CD8-positive, alpha-beta T cell (primary cell): ENCODE measurements at regions of chr9 and their contacts with region 1.

Region 1: DNA sequence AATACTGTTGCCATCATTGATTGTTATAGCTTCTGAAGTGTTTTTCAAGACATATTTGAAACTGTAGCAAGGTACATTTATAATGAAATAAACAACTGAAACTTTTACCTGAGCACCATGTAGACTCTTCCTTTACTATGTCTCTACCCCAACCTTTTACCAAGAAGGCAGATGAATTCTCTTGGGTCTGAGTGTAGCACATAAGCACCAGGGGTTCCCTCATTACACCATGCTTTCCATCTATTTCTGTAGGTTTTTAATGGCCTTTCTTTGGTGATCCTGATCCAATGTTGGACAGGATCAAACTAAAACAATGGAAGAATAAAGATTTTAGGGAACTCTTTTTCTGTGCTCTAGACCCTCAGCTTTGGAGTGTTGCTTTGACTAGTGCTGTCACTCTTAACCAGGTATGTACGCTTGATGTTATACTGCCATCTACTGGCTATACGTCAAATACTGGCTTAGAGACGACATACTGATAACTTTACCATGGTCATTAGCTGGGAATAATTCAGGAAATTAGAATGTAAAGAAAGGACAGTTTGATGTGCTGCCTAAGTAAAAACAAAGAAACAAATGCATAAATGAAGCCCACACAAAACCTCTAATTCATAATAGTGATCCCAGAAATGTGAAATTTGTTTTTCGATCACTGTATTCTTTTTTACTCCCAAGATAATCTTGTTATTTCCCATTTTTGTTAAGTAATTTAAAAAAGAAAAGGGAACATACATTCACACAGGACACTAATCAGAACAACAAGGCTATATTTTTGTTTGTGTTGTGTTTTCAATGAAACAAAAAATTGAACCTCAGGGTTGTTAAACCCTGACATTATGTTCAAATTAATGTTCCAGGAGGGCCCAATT is 30.7 kb downstream of the IFNW1 start:
- DNase-seq: peak in 3 of 9 experiments; percentile 19 to 85 (median 78)
- ATAC-seq: peak; percentile 92
- H3K4me3 ChIP-seq: no peak overlapping the region
- H3K4me3 Mint-ChIP-seq: no peak overlapping the region
- H3K27ac ChIP-seq: no peak overlapping the region
- H3K27ac Mint-ChIP-seq: no peak overlapping the region
- H3K4me1 ChIP-seq: no peaks in the 10 kb centered on the region
- H3K4me1 Mint-ChIP-seq: no peaks in the 10 kb centered on the region
- H3K27me3 ChIP-seq: no peaks in the 10 kb centered on the region
- H3K27me3 Mint-ChIP-seq: peaks cover 2% of the 10 kb centered on the region
- CTCF ChIP-seq: peak; percentile 95

Region 2: DNA sequence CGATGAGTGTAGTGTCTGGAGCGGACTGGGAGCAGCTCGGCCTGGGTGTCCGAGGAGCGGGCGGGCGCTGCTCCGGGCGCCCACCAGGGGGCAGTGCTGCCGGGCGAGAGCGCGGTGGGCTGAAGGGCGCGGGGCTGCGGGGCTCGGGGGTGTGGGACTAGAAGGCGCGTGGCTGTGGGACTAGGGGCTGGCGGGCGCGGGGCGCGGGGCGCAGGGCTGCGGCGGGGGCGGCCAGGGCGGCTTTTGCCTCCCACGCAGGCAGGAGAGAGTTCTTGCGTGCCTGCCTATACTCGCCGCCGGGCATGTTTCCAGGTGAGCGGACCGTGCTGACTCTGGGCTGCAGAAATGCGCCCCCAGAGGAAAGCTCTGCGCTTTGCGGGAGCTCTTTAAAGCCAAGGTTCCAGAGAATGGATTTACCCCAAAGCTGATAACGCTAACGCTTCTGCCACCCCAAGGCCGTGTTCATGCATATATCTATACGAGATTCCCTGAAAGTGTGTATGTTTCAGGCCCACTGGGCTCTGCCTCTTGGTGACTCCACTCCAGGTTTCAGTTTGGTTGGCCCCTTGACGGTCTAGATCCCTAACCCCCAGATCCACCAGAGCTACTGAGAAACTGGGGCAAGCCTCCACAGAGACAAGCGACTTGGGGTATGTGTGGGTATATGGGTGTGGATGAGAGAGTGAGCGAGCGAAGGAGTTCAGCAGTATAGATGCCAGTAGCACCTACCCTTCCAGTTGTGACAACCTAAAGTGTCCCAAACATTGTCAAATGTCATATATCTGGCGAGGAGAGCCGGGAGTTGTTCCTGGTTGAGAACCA is 1646.0 kb before region 1 on chr9:
- CTCF ChIA-PET with region 1: interaction called, 4 read pairs
- POLR2A ChIA-PET with region 1: interaction called, 3 read pairs
- intact Hi-C with region 1: loop called (anchors 5 to 10 kb)
- DNase-seq: peak; percentile 44 to 83 (median 71)
- ATAC-seq: peak; percentile 91
- H3K4me3 ChIP-seq: peak overlapping the region; percentile 35 to 56
- H3K4me3 Mint-ChIP-seq: peak overlapping the region; percentile 89
- H3K27ac ChIP-seq: no peak overlapping the region
- H3K27ac Mint-ChIP-seq: no peak overlapping the region
- H3K4me1 ChIP-seq: peaks cover 7% of the 10 kb centered on the region
- H3K4me1 Mint-ChIP-seq: peaks cover 10% of the 10 kb centered on the region
- H3K27me3 ChIP-seq: no peaks in the 10 kb centered on the region
- H3K27me3 Mint-ChIP-seq: peaks cover 2% of the 10 kb centered on the region
- CTCF ChIP-seq: peak; percentile 80

Region 3: GRCh38 chr9:19493174-19493811 is 1617.6 kb before region 1 on chr9:
- CTCF ChIA-PET with region 1: no interaction called
- POLR2A ChIA-PET with region 1: no interaction called
- intact Hi-C with region 1: loop called (anchors 1 to 2 kb)
- DNase-seq: peak in 6 of 9 experiments; percentile 10 to 60 (median 42)
- ATAC-seq: peak; percentile 63
- H3K4me3 ChIP-seq: no peak overlapping the region
- H3K4me3 Mint-ChIP-seq: peak overlapping the region; percentile 40
- H3K27ac ChIP-seq: no peak overlapping the region
- H3K27ac Mint-ChIP-seq: no peak overlapping the region
- H3K4me1 ChIP-seq: no peaks in the 10 kb centered on the region
- H3K4me1 Mint-ChIP-seq: peaks cover 9% of the 10 kb centered on the region
- H3K27me3 ChIP-seq: no peaks in the 10 kb centered on the region
- H3K27me3 Mint-ChIP-seq: peaks cover 15% of the 10 kb centered on the region
- CTCF ChIP-seq: peak; percentile 76

Region 4: DNA sequence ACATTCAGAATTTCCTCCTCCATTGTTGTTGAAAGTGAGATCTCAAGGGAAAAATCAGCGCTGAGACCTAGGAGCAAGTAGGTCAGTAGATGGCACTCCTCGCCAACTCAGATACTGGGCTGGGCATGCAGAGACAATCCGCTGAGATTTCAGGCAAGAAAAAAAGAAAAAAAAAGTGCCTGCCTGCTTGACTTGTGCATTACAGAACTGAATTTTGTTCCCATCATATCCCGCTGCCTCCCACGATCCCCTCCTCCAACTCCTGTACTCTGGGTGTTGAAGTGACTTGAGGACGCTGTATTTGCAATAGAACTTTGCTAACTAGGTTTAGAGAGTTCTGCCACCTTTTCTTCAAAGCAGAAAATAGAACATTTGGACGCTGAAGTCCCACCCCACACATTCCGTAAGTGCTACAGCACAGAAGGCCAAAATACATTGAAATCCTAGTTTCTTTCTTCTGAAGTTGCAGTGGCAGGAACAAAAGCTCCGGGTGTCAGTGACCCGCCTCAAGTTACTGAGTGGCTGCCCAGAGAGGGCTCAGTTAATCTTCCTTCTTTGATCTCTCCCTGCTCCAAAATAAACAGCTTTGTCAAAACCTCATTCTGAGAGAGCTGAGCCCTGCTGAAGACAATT is 754.4 kb before region 1 on chr9:
- CTCF ChIA-PET with region 1: interaction called, 4 read pairs
- POLR2A ChIA-PET with region 1: no interaction called
- intact Hi-C with region 1: loop called (anchors 1 to 2 kb)
- DNase-seq: peak; percentile 6 to 69 (median 42)
- ATAC-seq: peak; percentile 75
- H3K4me3 ChIP-seq: no peak overlapping the region
- H3K4me3 Mint-ChIP-seq: no peak overlapping the region
- H3K27ac ChIP-seq: no peak overlapping the region
- H3K27ac Mint-ChIP-seq: no peak overlapping the region
- H3K4me1 ChIP-seq: peaks cover 7% of the 10 kb centered on the region
- H3K4me1 Mint-ChIP-seq: peaks cover 38% of the 10 kb centered on the region
- H3K27me3 ChIP-seq: no peaks in the 10 kb centered on the region
- H3K27me3 Mint-ChIP-seq: no peaks in the 10 kb centered on the region
- CTCF ChIP-seq: peak; percentile 59

Region 5: GRCh38 chr9:20884985-20885593 is 225.9 kb before region 1 on chr9:
- CTCF ChIA-PET with region 1: interaction called, 62 read pairs
- POLR2A ChIA-PET with region 1: no interaction called
- intact Hi-C with region 1: loop called (anchors 1 kb)
- DNase-seq: peak; percentile 37 to 72 (median 58)
- ATAC-seq: peak; percentile 44
- H3K4me3 ChIP-seq: no peak overlapping the region
- H3K4me3 Mint-ChIP-seq: no peak overlapping the region
- H3K27ac ChIP-seq: no peak overlapping the region
- H3K27ac Mint-ChIP-seq: no peak overlapping the region
- H3K4me1 ChIP-seq: no peaks in the 10 kb centered on the region
- H3K4me1 Mint-ChIP-seq: no peaks in the 10 kb centered on the region
- H3K27me3 ChIP-seq: no peaks in the 10 kb centered on the region
- H3K27me3 Mint-ChIP-seq: no peaks in the 10 kb centered on the region
- CTCF ChIP-seq: peak; percentile 76

Region 6: DNA sequence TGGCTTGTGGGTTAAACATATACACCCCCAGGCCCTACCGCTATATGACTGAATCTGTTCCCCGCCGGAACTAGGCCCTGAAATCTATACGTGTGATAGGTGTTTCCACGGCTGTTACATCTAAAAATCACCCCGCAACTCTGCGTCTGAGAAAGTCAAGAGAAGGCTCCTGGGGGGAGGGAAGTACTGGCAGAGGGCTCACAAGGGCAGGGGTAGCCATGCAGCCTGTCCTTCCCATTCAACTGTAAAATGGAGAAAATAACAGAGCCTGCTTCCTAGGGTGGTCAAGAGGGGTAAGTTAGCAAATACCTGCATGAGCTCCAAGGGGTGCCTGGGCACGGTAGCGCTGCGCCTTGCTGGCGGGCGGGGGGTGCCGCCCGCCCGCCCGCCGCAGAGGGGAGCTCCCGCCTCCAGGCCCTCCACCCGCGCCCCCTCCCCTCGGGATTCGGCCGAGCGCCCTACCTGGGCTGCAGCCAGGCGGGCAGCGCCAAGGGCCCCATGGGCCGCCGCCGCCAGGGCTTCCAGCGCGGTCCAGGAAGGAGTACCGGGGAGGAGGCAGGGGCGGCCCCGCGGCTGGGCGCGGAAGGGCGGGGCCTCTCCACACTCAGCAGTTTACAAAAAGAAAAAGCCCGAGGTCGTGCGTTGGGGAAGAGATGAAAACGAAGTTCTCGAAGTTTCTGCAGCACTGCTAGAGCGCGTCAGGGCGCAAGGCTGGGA is 79.7 kb before region 1 on chr9 and contains the start of gene HACD4:
- CTCF ChIA-PET with region 1: interaction called, 4 read pairs
- POLR2A ChIA-PET with region 1: no interaction called
- intact Hi-C with region 1: loop called in 1 of 2 experiments (anchors 1 kb)
- DNase-seq: peak; percentile 40 to 83 (median 68)
- ATAC-seq: peak; percentile 82
- H3K4me3 ChIP-seq: peak within 1 kb of the TSS; percentile 75 to 94
- H3K4me3 Mint-ChIP-seq: peak within 1 kb of the TSS; percentile 84
- H3K27ac ChIP-seq: peak within 1 kb of the TSS; percentile 79 to 85
- H3K27ac Mint-ChIP-seq: peak within 1 kb of the TSS; percentile 88
- H3K4me1 ChIP-seq: peaks cover 41% of the 10 kb centered on the region
- H3K4me1 Mint-ChIP-seq: peaks cover 24% of the 10 kb centered on the region
- H3K27me3 ChIP-seq: no peaks in the 10 kb centered on the region
- H3K27me3 Mint-ChIP-seq: no peaks in the 10 kb centered on the region
- CTCF ChIP-seq: no peak
- total RNA-seq, gene HACD4: 5.9 to 6.3 TPM

Region 7: GRCh38 chr9:21078717-21079116 is 32.2 kb before region 1 on chr9:
- CTCF ChIA-PET with region 1: interaction called, 27 read pairs
- POLR2A ChIA-PET with region 1: no interaction called
- intact Hi-C with region 1: loop called in 1 of 2 experiments (anchors 2 kb)
- DNase-seq: peak in 2 of 9 experiments; percentile 37 to 49
- ATAC-seq: no peak
- H3K4me3 ChIP-seq: no peak overlapping the region
- H3K4me3 Mint-ChIP-seq: no peak overlapping the region
- H3K27ac ChIP-seq: no peak overlapping the region
- H3K27ac Mint-ChIP-seq: no peak overlapping the region
- H3K4me1 ChIP-seq: peaks cover 15% of the 10 kb centered on the region
- H3K4me1 Mint-ChIP-seq: peaks cover 26% of the 10 kb centered on the region
- H3K27me3 ChIP-seq: no peaks in the 10 kb centered on the region
- H3K27me3 Mint-ChIP-seq: no peaks in the 10 kb centered on the region
- CTCF ChIP-seq: no peak